Calu3 (cell line): ENCODE measurements at regions of chr7 and their contacts with region 1.

Region 1: GRCh38 chr7:6658618-6659341 is 21.7 kb downstream of the ZNF316 start:
- DNase-seq: no peak
- H3K4me3 Mint-ChIP-seq: no peak overlapping the region
- H3K27ac Mint-ChIP-seq: no peak overlapping the region
- H3K4me1 Mint-ChIP-seq: no peaks in the 10 kb centered on the region
- H3K27me3 Mint-ChIP-seq: no peaks in the 10 kb centered on the region
- CTCF ChIP-seq: no peak

Region 2: GRCh38 chr7:5838761-5839500 is 819.8 kb before region 1 on chr7:
- CTCF ChIA-PET with region 1: interaction called, 12 read pairs
- intact Hi-C with region 1: no loop called
- DNase-seq: no peak
- H3K4me3 Mint-ChIP-seq: no peak overlapping the region
- H3K27ac Mint-ChIP-seq: no peak overlapping the region
- H3K4me1 Mint-ChIP-seq: no peaks in the 10 kb centered on the region
- H3K27me3 Mint-ChIP-seq: no peaks in the 10 kb centered on the region
- CTCF ChIP-seq: no peak

Region 3: GRCh38 chr7:6577365-6578113 is 81.2 kb before region 1 on chr7 and contains the start of gene ZDHHC4:
- CTCF ChIA-PET with region 1: no interaction called
- intact Hi-C with region 1: no loop called
- DNase-seq: peak; percentile 95
- H3K4me3 Mint-ChIP-seq: peak within 1 kb of the TSS; percentile 97
- H3K27ac Mint-ChIP-seq: peak within 1 kb of the TSS; percentile 99
- H3K4me1 Mint-ChIP-seq: peaks cover 9% of the 10 kb centered on the region
- H3K27me3 Mint-ChIP-seq: peaks cover 11% of the 10 kb centered on the region
- CTCF ChIP-seq: no peak
- total RNA-seq, gene ZDHHC4: 80.7 and 83.9 TPM in 2 replicates